Left lung (tissue), 14 donors: ENCODE measurements at regions of chr11 and their contacts with region 1.

Region 1: DNA sequence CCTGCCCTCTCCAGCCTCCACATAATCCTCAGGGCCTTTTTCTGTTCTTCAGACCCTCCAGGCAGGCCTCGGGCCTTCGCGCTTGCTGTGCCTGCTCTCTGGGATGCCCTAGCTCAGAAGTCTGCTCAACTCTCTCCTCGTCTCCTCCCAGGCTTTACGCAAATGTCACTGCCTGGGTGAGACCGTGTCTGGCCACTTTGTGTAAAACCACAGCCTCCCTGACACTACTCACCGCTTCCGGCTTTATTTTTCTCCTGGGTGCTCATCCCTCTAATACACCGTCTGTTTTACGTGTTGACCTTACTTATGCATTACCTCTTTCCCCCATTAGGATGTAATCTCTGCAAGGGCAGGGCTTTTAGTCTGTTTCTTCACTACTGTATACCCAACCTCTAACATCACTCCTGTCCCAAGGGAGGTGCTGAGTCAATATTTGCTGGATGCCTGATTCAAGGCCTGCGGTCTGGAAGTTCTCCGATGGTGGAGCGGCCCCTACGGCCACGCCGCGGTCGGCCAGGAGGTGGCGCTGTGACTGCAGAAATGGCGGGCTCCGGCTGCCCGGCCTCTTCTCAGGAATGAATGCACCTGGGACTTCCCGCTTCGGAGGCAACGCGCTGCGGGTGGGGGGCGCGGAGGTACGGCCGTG is 58.2 kb upstream of the THY1 start:
- DNase-seq: peak; percentile 50 to 94 (median 70)
- ATAC-seq: peak; percentile 96
- H3K4me3 ChIP-seq: no peak overlapping the region
- H3K27ac ChIP-seq: no peak overlapping the region
- H3K4me1 ChIP-seq: peaks cover 0 to 4% of the 10 kb centered on the region in 2 donors
- H3K27me3 ChIP-seq: peaks cover 0 to 20% of the 10 kb centered on the region in 2 donors
- CTCF ChIP-seq: peak; percentile 95 to 97

Region 2: GRCh38 chr11:119363851-119364590 is 117.1 kb before region 1 on chr11:
- intact Hi-C with region 1: no loop called
- DNase-seq: peak in 2 of 4 donors; percentile 63 to 92
- ATAC-seq: peak; percentile 63
- H3K4me3 ChIP-seq: peak overlapping the region; percentile 25 to 35
- H3K27ac ChIP-seq: no peak overlapping the region
- H3K4me1 ChIP-seq: peaks cover 13 to 40% of the 10 kb centered on the region in 2 donors
- H3K27me3 ChIP-seq: peaks cover 5 to 35% of the 10 kb centered on the region in 2 donors
- CTCF ChIP-seq: no peak

Region 3: GRCh38 chr11:119728651-119729580 is 247.8 kb after region 1 on chr11 and contains the start of gene NECTIN1:
- intact Hi-C with region 1: loop called in 1 of 2 experiments (anchors 5 kb)
- DNase-seq: peak; percentile 91 to 99 (median 94)
- ATAC-seq: peak; percentile 92
- H3K4me3 ChIP-seq: peak within 1 kb of the TSS; percentile 69 to 78
- H3K27ac ChIP-seq: peak within 1 kb of the TSS; percentile 78 to 84
- H3K4me1 ChIP-seq: peaks cover 16 to 30% of the 10 kb centered on the region in 2 donors
- H3K27me3 ChIP-seq: peaks cover 0 to 13% of the 10 kb centered on the region in 2 donors
- CTCF ChIP-seq: peak; percentile 98 to 99
- polyA plus RNA-seq, gene NECTIN1: 13.9 to 21.1 (median 16.9) TPM